ENCODE measurements at regions of chr14 and their contacts with region 1.

Region 1: GRCh38 chr14:24195191-24196070 is at the start of gene TM9SF1:
- DNase-seq: peak; percentile 78 to 95 (median 86)
- ATAC-seq: peak; percentile 88
- H3K4me3 ChIP-seq: peak within 1 kb of the TSS; percentile 93
- H3K4me3 Mint-ChIP-seq: peak within 1 kb of the TSS; percentile 87
- H3K27ac ChIP-seq: peak within 1 kb of the TSS; percentile 97 to 99
- H3K27ac Mint-ChIP-seq: peak within 1 kb of the TSS; percentile 92
- H3K4me1 ChIP-seq: peaks cover 37% of the 10 kb centered on the region
- H3K4me1 Mint-ChIP-seq: peaks cover 51% of the 10 kb centered on the region
- H3K27me3 ChIP-seq: no peaks in the 10 kb centered on the region
- H3K27me3 Mint-ChIP-seq: no peaks in the 10 kb centered on the region
- CTCF ChIP-seq: no peak
- total RNA-seq, gene TM9SF1: 12.9 to 13.0 TPM

Region 2: GRCh38 chr14:24036169-24036962 is 159.1 kb before region 1 on chr14:
- CTCF ChIA-PET with region 1: no interaction called
- POLR2A ChIA-PET with region 1: no interaction called
- intact Hi-C with region 1: no loop called
- DNase-seq: peak; percentile 37 to 81 (median 62)
- ATAC-seq: peak; percentile 88
- H3K4me3 ChIP-seq: peak overlapping the region; percentile 68
- H3K4me3 Mint-ChIP-seq: peak overlapping the region; percentile 90
- H3K27ac ChIP-seq: peak overlapping the region; percentile 16 to 23
- H3K27ac Mint-ChIP-seq: peak overlapping the region; percentile 54
- H3K4me1 ChIP-seq: peaks cover 7% of the 10 kb centered on the region
- H3K4me1 Mint-ChIP-seq: peaks cover 12% of the 10 kb centered on the region
- H3K27me3 ChIP-seq: no peaks in the 10 kb centered on the region
- H3K27me3 Mint-ChIP-seq: no peaks in the 10 kb centered on the region
- CTCF ChIP-seq: peak; percentile 74

Region 3: DNA sequence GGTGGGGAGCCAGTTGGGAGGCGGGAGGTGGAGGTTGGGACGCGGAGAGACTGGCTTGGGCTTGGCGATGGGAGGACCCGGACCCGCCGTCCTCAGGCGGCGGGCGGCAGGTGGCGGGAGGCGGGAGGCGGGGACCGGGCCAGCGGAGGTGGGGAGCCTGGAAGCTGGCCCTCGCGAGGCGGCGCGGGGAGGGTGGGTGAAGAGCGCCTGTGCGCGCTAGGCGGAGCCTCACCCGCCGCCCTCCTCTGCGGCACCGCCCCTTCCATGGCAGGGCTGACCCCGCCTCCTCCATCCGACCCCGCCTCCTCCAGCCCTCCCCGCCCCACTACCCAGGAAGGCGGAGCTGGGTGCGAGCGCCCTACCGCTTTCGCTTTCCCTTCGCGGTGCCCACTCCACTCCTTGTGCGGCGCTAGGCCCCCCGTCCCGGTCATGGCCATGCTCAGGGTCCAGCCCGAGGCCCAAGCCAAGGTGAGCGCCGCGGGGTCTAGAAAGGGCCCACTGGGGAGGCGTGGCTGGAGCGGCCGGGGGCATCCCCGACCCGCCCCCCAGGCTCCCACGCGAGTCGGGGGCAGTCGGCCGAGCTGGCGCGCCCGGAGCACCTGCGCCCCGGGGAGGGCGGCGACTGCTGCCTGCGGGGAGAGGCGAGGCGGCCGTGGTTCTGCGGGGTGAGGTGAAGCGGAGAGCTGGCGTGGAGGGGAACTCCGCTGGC is 59.4 kb before region 1 on chr14 and contains the start of gene PSME1:
- CTCF ChIA-PET with region 1: no interaction called
- POLR2A ChIA-PET with region 1: interaction called, 12 read pairs
- intact Hi-C with region 1: loop called in 1 of 2 experiments (anchors 2 kb)
- DNase-seq: peak; percentile 89 to 97 (median 95)
- ATAC-seq: peak; percentile 97
- H3K4me3 ChIP-seq: peak within 1 kb of the TSS; percentile 74
- H3K4me3 Mint-ChIP-seq: peak within 1 kb of the TSS; percentile 94
- H3K27ac ChIP-seq: peak within 1 kb of the TSS; percentile 72 to 88
- H3K27ac Mint-ChIP-seq: peak within 1 kb of the TSS; percentile 85
- H3K4me1 ChIP-seq: peaks cover 68% of the 10 kb centered on the region
- H3K4me1 Mint-ChIP-seq: peaks cover 70% of the 10 kb centered on the region
- H3K27me3 ChIP-seq: no peaks in the 10 kb centered on the region
- H3K27me3 Mint-ChIP-seq: no peaks in the 10 kb centered on the region
- CTCF ChIP-seq: no peak
- total RNA-seq, gene PSME1: 166 to 171 TPM

Region 4: GRCh38 chr14:24141097-24141880 is 54.1 kb before region 1 on chr14 and contains the start of gene EMC9:
- CTCF ChIA-PET with region 1: no interaction called
- POLR2A ChIA-PET with region 1: interaction called, 21 read pairs
- intact Hi-C with region 1: loop called in 1 of 2 experiments (anchors 2 kb)
- DNase-seq: peak; percentile 97 to 100 (median 99)
- ATAC-seq: peak; percentile 90
- H3K4me3 ChIP-seq: peak within 1 kb of the TSS; percentile 92
- H3K4me3 Mint-ChIP-seq: peak within 1 kb of the TSS; percentile 95
- H3K27ac ChIP-seq: peak within 1 kb of the TSS; percentile 62 to 71
- H3K27ac Mint-ChIP-seq: peak within 1 kb of the TSS; percentile 90
- H3K4me1 ChIP-seq: peaks cover 73% of the 10 kb centered on the region
- H3K4me1 Mint-ChIP-seq: peaks cover 76% of the 10 kb centered on the region
- H3K27me3 ChIP-seq: no peaks in the 10 kb centered on the region
- H3K27me3 Mint-ChIP-seq: no peaks in the 10 kb centered on the region
- CTCF ChIP-seq: no peak
- total RNA-seq, gene EMC9: 11.8 to 13.1 TPM

Measured in CD4-positive, alpha-beta T cell (primary cell).